T-cell (primary cell): ENCODE measurements at regions of chr22 and their contacts with region 1.

Region 1: DNA sequence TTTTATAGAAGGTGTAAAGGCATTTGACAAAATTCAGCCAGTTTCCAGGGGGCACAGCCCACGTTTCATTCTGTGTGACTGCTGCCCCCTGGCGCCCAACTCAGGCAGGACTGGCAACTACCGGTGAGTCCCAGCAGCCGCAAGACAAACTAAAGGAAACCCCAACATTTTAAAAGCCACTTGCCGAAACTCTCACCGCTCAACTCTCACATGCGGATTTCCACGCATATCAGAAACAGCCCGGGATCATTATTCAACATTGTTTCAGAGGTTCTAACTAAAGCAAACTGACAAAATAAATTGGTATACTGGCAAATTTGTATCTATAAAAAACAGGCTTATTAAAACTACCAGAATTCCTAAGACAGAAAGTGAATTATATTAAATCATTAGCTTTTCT is 48.2 kb downstream of the MORC2 start:
- DNase-seq: peak; percentile 56 to 88 (median 80)
- ATAC-seq: peak; percentile 68 to 78 (median 73)
- H3K4me3 ChIP-seq: peak overlapping the region; percentile 3 to 20
- H3K4me3 Mint-ChIP-seq: peak overlapping the region; percentile 73 to 82 (median 74)
- H3K27ac ChIP-seq: no peak overlapping the region
- H3K27ac Mint-ChIP-seq: peak overlapping the region in 1 of 2 donors; percentile 3
- H3K4me1 ChIP-seq: peaks cover 4 to 20% of the 10 kb centered on the region in 2 experiments
- H3K4me1 Mint-ChIP-seq: peaks cover 19 to 31% (median 21%) of the 10 kb centered on the region in 3 donors
- H3K27me3 ChIP-seq: no peaks in the 10 kb centered on the region
- H3K27me3 Mint-ChIP-seq: no peaks in the 10 kb centered on the region

Region 2: DNA sequence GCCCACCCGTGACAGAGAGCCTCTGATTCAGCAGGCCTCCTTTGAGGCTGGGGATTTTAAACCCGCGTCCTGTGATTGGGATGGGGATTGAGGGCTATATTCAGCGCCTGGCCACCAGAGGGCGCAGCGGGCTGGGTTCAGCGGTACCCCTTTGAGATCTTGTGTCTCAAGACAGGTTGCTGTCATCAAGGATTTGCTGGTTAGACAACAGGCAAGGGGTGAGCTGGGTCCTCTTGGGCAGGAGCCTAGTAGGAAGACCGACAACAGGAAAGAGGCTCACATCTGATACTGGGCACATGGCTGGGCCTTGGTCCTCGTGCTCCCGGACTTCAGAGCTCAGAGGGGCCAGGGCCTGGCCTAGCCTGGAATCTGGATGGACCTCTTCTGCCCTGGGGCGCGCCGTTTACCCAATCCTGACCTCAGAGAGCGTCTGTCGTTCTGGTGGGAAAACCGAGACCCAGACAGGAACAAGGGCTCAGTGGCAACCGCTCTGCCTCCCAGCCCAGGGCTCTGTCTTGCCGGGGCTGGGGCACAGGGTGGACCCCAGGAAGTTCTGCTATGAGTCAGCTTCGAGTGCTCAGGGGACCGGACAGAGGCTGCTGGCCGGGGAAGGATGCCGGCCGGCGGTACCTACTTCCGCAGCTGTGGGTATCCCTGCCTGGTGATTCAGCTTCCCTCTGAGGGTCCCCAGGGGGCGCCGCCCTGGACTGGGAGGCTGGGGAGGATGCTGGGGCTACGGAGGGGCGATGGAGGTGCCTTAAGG is 285.8 kb before region 1 on chr22:
- CTCF ChIA-PET with region 1: interaction called in 1 of 2 experiments, 11 read pairs
- POLR2A ChIA-PET with region 1: no interaction called
- DNase-seq: peak; percentile 66 to 93 (median 85)
- ATAC-seq: peak; percentile 62 to 68 (median 64)
- H3K4me3 ChIP-seq: peak overlapping the region; percentile 52
- H3K4me3 Mint-ChIP-seq: peak overlapping the region; percentile 75 to 85 (median 75)
- H3K27ac ChIP-seq: peak overlapping the region; percentile 84
- H3K27ac Mint-ChIP-seq: peak overlapping the region; percentile 85 to 90
- H3K4me1 ChIP-seq: peaks cover 6 to 34% of the 10 kb centered on the region in 2 experiments
- H3K4me1 Mint-ChIP-seq: peaks cover 13 to 24% (median 20%) of the 10 kb centered on the region in 3 donors
- H3K27me3 ChIP-seq: no peaks in the 10 kb centered on the region
- H3K27me3 Mint-ChIP-seq: no peaks in the 10 kb centered on the region

Region 3: GRCh38 chr22:30763815-30764686 is 156.4 kb before region 1 on chr22:
- CTCF ChIA-PET with region 1: interaction called in 1 of 2 experiments, 13 read pairs
- POLR2A ChIA-PET with region 1: no interaction called
- DNase-seq: peak in 34 of 35 experiments; percentile 15 to 79 (median 41)
- ATAC-seq: peak; percentile 46 to 78 (median 72)
- H3K4me3 ChIP-seq: no peak overlapping the region
- H3K4me3 Mint-ChIP-seq: no peak overlapping the region
- H3K27ac ChIP-seq: no peak overlapping the region
- H3K27ac Mint-ChIP-seq: no peak overlapping the region
- H3K4me1 ChIP-seq: peaks cover 0 to 4% of the 10 kb centered on the region in 2 experiments
- H3K4me1 Mint-ChIP-seq: peaks cover 0 to 2% (median 2%) of the 10 kb centered on the region in 3 donors
- H3K27me3 ChIP-seq: no peaks in the 10 kb centered on the region
- H3K27me3 Mint-ChIP-seq: no peaks in the 10 kb centered on the region

Region 4: DNA sequence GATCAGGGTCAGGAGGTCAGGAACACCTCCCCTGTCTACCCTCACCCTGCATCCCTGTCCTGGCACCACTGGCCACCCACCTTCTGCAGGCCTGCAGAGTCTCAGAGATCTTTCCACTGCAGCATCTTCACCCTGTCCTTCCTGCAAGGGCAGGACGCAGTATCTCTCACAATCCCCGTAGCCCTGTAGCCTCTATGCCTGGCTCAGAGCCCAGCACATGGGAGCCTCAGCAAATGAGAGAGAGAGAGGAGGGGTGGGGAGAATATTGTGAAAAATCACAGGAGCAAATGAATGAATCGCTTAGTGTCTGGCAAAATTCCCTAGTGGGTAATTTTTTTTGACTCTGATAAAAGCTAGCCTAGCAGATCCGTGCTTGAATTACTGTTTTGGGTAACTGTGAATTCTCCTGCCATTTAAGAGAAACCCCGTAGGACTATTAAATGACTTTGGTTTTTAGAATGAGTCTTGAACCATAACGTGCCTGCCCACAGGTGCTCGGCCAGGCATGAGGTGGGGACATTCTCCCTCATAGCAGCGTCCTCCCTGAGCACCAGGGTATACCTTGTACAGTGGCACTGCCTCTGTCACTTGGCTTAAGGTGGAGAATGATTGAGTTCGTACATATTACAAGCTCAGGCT is 43.4 kb before region 1 on chr22:
- CTCF ChIA-PET with region 1: no interaction called
- POLR2A ChIA-PET with region 1: no interaction called
- DNase-seq: no peak
- ATAC-seq: no peak
- H3K4me3 ChIP-seq: no peak overlapping the region
- H3K4me3 Mint-ChIP-seq: no peak overlapping the region
- H3K27ac ChIP-seq: no peak overlapping the region
- H3K27ac Mint-ChIP-seq: no peak overlapping the region
- H3K4me1 ChIP-seq: no peaks in the 10 kb centered on the region
- H3K4me1 Mint-ChIP-seq: no peaks in the 10 kb centered on the region
- H3K27me3 ChIP-seq: peaks cover 0 to 9% of the 10 kb centered on the region in 2 experiments
- H3K27me3 Mint-ChIP-seq: no peaks in the 10 kb centered on the region

Region 5: DNA sequence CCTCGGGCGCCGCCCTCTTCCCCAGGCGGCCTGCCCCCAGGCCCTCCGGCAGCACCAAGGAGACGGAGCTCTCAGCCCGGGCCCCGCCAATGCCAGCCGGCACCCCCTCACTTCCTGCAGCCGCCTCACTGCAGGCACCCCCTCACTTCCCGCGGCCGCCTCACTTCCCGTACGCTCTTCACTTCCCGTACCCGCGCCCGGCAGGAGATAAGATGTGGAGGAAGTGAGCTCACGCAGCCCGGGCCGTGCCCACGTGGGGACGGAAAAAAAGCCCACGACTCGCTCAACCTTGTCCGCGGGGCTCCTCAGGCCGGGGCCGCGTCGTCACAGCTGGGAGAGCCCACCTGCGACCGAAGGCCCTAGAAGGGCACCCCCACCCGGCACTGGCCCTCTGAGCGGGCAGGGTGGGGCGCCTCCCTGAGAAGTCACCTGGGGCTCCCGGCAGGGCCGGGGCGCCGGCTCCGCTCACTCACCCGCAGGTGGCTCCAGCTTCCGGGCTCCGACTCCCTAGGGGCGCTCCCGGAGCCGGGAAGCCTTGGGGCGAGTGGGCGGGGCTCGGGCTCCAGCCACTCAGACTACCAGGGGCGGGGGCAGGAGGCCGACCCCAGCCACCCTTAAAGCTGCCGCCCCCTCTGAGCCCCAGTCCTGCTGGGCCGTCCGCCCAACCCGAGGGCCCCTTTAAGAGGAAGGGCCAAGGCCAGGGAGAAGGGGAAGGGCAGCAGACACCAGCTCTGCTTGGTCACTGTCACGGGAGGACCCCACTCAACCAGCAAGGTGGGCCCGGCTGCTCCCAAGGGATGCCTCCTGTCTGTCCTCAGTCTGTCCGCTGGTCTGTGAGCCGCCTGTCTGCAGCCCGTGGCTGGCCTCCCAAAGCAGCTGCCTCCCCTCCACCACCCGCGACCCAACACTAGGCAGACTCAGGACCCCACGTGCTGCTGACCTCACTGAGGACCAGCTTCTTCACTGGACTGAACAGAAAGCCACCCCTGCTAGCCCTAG is 710.2 kb after region 1 on chr22:
- CTCF ChIA-PET with region 1: no interaction called
- POLR2A ChIA-PET with region 1: no interaction called
- DNase-seq: peak; percentile 75 to 94 (median 88)
- ATAC-seq: peak; percentile 90 to 92 (median 91)
- H3K4me3 ChIP-seq: peak overlapping the region; percentile 74 to 84
- H3K4me3 Mint-ChIP-seq: peak overlapping the region; percentile 82 to 86 (median 84)
- H3K27ac ChIP-seq: peak overlapping the region; percentile 89
- H3K27ac Mint-ChIP-seq: peak overlapping the region; percentile 89 to 92
- H3K4me1 ChIP-seq: peaks cover 15 to 64% of the 10 kb centered on the region in 2 experiments
- H3K4me1 Mint-ChIP-seq: peaks cover 49 to 52% (median 51%) of the 10 kb centered on the region in 3 donors
- H3K27me3 ChIP-seq: no peaks in the 10 kb centered on the region
- H3K27me3 Mint-ChIP-seq: no peaks in the 10 kb centered on the region